Activated CD4-positive, alpha-beta T cell treated with anti-CD3 and anti-CD28 coated beads for 36 hours (primary cell): ENCODE measurements at regions of chr1 and their contacts with region 1.

Region 1: GRCh38 chr1:224434691-224435317 is at the start of gene WDR26:
- DNase-seq: peak; percentile 92
- ATAC-seq: peak; percentile 85
- H3K4me3 Mint-ChIP-seq: peak within 1 kb of the TSS; percentile 81
- H3K27ac Mint-ChIP-seq: peak within 1 kb of the TSS; percentile 97
- H3K4me1 Mint-ChIP-seq: peaks cover 52% of the 10 kb centered on the region
- H3K27me3 Mint-ChIP-seq: no peaks in the 10 kb centered on the region
- total RNA-seq, gene WDR26: 74.0 to 75.6 TPM

Region 2: DNA sequence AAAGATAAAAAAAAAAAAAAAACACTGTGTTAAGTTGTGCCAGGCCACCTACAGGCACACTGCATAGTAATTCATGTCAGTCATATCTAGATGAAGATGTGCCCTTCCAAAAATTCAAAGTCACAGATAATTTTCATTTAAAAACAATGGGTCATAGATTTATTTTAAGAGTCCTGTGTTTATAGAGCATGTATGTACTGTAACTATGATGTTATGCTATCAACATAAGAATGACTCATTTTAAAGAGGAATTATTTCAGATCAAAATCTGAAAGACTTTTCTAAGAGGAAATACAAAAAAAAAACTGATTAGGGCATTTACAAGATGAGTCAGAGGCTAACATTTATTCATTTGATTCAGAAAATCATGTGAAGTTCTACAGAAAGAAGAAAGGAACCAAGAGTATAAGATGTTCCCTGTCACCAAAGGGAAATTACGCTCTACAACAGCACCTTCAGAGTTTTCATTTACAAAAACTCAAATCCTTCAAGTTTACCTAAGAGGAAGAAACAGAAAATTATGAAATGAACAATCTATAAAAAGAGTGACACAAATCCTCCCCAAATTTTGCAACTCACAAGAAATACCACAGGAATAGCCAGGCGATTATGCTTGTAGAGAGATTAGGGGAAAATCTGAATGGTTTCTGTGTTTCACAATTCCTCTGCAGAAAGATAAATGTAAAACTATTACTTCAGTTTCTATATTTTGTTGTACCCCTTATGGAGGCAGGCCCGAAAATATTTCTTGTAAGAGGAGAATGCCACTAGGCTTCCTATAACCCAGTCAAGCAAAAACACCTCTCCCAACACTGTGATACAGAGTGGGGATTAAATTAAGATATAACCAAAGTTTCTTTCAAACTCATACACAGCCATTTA is 602.8 kb before region 1 on chr1:
- CTCF ChIA-PET with region 1: no interaction called
- POLR2A ChIA-PET with region 1: no interaction called
- intact Hi-C with region 1: loop called in 1 of 2 experiments (anchors 5 kb)
- DNase-seq: no peak
- ATAC-seq: peak; percentile 71
- H3K4me3 Mint-ChIP-seq: no peak overlapping the region
- H3K27ac Mint-ChIP-seq: no peak overlapping the region
- H3K4me1 Mint-ChIP-seq: peaks cover 29% of the 10 kb centered on the region
- H3K27me3 Mint-ChIP-seq: no peaks in the 10 kb centered on the region

Region 3: GRCh38 chr1:224182866-224183590 is 251.8 kb before region 1 on chr1 and contains the start of gene DEGS1:
- CTCF ChIA-PET with region 1: no interaction called
- POLR2A ChIA-PET with region 1: no interaction called
- intact Hi-C with region 1: loop called (anchors 2 kb)
- DNase-seq: peak; percentile 91
- ATAC-seq: peak; percentile 77
- H3K4me3 Mint-ChIP-seq: peak within 1 kb of the TSS; percentile 82
- H3K27ac Mint-ChIP-seq: peak within 1 kb of the TSS; percentile 95
- H3K4me1 Mint-ChIP-seq: peaks cover 45% of the 10 kb centered on the region
- H3K27me3 Mint-ChIP-seq: peaks cover 5% of the 10 kb centered on the region
- total RNA-seq, gene DEGS1: 24.0 to 24.5 TPM

Region 4: GRCh38 chr1:224356685-224357625 is 77.8 kb before region 1 on chr1 and contains the start of gene CNIH4:
- CTCF ChIA-PET with region 1: no interaction called
- POLR2A ChIA-PET with region 1: interaction called, 7 read pairs
- intact Hi-C with region 1: loop called (anchors 1 to 2 kb)
- DNase-seq: peak; percentile 95
- ATAC-seq: peak; percentile 98
- H3K4me3 Mint-ChIP-seq: peak within 1 kb of the TSS; percentile 80
- H3K27ac Mint-ChIP-seq: peak within 1 kb of the TSS; percentile 89
- H3K4me1 Mint-ChIP-seq: peaks cover 30% of the 10 kb centered on the region
- H3K27me3 Mint-ChIP-seq: no peaks in the 10 kb centered on the region
- total RNA-seq, gene CNIH4: 29.9 to 49.6 TPM

Region 5: DNA sequence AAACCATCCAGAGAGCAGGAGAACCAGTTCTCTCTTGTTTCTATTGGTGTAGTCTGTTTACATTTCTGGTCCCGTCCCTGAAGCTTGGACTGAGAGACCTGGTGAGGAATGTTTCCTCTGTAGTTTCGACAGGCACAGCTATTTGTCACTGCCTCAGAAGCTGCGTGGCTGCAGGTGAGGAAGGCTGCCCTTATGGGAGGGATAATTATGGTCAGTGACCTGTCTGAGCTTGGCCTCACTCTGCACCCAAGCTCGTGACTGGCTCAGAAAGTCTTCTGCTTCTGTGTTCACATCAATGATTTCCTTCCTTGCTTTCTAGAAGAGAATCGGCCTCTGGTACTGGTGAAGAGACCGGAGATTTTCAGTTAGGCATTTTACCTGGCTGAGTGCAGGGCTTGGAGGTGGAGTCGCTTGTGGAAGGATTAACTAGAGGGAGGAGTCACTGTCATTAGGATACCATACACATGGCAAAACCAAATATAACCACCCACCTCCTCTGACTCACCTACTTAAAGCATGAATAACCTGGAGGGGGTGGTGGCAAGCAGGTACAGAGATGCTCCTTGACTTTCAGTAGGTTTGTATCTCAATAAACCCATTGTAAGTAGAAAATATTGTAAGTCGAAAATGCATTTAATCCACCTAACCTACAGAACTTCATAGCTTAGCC is 19.7 kb after region 1 on chr1:
- CTCF ChIA-PET with region 1: interaction called, 20 read pairs
- POLR2A ChIA-PET with region 1: interaction called, 6 read pairs
- intact Hi-C with region 1: loop called (anchors 1 kb)
- DNase-seq: no peak
- ATAC-seq: peak; percentile 37
- H3K4me3 Mint-ChIP-seq: no peak overlapping the region
- H3K27ac Mint-ChIP-seq: no peak overlapping the region
- H3K4me1 Mint-ChIP-seq: peaks cover 19% of the 10 kb centered on the region
- H3K27me3 Mint-ChIP-seq: no peaks in the 10 kb centered on the region

Region 6: GRCh38 chr1:224623743-224624333 is 189.0 kb after region 1 on chr1:
- CTCF ChIA-PET with region 1: no interaction called
- POLR2A ChIA-PET with region 1: no interaction called
- intact Hi-C with region 1: loop called in 1 of 2 experiments (anchors 5 kb)
- DNase-seq: peak; percentile 87
- ATAC-seq: peak; percentile 92
- H3K4me3 Mint-ChIP-seq: peak overlapping the region; percentile 45
- H3K27ac Mint-ChIP-seq: peak overlapping the region; percentile 96
- H3K4me1 Mint-ChIP-seq: peaks cover 25% of the 10 kb centered on the region
- H3K27me3 Mint-ChIP-seq: peaks cover 25% of the 10 kb centered on the region

Region 7: GRCh38 chr1:225299624-225300023 is 864.8 kb after region 1 on chr1:
- CTCF ChIA-PET with region 1: no interaction called
- POLR2A ChIA-PET with region 1: no interaction called
- intact Hi-C with region 1: no loop called
- DNase-seq: no peak
- ATAC-seq: no peak
- H3K4me3 Mint-ChIP-seq: no peak overlapping the region
- H3K27ac Mint-ChIP-seq: no peak overlapping the region
- H3K4me1 Mint-ChIP-seq: no peaks in the 10 kb centered on the region
- H3K27me3 Mint-ChIP-seq: peaks cover 3% of the 10 kb centered on the region